ENCODE measurements at regions of chr7 and their contacts with region 1.

Region 1: DNA sequence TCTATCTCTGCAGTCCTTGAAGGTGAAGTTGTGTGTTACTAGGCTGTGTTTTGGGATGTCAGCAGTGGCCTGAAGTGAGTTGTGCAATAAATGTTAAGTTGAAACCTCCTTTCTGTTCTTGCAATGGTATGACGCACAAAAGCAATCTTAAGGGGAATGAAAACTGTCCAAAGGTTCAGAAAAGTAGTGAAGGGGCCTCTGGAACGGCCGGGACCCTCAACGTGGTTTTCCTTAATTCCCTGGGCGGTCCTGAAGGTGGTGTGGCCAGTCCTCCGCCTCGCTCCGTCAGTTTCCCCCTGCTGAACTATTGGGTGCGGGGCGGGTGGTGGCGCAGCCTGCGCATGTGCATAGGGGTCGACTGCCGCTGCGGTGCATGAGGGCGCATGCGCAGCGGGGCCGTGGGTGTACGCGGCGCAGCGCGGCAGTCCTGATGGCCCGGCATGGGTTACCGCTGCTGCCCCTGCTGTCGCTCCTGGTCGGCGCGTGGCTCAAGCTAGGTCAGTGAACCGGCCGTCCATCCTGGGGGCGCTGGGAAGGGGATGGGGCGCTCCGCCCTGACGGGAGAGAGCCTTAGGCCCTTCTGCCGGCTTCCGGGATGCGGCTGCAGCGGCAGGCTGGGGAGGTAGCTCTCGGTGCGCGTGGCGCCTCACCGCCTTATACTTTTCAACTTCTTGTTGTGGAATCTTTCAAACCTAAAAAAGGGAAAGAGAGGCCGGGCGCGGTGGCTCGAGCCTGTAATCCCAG is at the start of gene SUMF2:
- DNase-seq: peak; percentile 85
- ATAC-seq: peak; percentile 84
- H3K4me3 ChIP-seq: peak within 1 kb of the TSS; percentile 94
- H3K27ac ChIP-seq: peak within 1 kb of the TSS; percentile 60
- H3K4me1 ChIP-seq: peaks cover 44% of the 10 kb centered on the region
- H3K27me3 ChIP-seq: no peaks in the 10 kb centered on the region
- CTCF ChIP-seq: no peak
- total RNA-seq, gene SUMF2: 57.4 and 65.6 TPM in 2 replicates

Region 2: DNA sequence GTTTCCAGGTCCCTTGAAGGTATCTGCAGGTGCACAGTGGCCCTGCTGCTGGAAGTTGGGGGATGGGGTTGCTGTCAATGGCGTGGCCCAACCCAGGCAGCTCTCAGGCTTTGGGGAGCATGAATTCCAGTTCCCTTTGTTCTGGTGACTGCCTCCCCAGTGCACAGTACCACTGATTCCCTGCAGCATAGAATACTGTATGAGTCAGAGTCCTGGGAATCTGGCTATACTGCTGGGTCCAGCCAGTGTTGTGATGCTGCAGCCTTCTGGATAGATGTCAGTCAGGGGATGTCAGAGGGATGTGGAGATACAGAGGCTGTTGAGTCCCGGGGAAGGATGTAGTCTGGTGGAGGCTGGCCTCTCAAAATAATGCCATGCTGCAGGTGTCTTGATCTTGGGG is 599.6 kb before region 1 on chr7:
- CTCF ChIA-PET with region 1: no interaction called
- POLR2A ChIA-PET with region 1: no interaction called
- intact Hi-C with region 1: no loop called
- DNase-seq: no peak
- ATAC-seq: peak; percentile 59
- H3K4me3 ChIP-seq: no peak overlapping the region
- H3K27ac ChIP-seq: no peak overlapping the region
- H3K4me1 ChIP-seq: no peaks in the 10 kb centered on the region
- H3K27me3 ChIP-seq: no peaks in the 10 kb centered on the region
- CTCF ChIP-seq: no peak

Region 3: DNA sequence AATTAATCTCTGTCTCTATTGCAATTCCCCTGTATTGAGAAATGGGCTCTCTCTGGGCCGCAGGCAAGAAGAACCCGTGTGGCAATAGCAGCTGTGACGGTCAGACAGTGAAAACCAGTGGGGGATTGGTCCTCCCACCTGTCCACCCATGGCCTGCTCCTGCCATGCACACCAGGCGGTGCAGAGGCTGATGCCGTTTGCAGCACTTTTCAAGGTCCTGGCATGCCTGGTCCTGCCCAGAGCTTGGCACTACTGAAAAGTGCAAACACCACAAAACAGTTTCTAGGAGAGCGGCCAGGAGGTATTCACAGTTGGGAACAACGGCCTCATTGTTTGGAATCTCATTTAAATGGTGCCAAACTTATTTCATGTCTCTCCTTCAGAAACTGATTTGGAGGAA is 54.4 kb before region 1 on chr7:
- CTCF ChIA-PET with region 1: interaction called, 12 read pairs
- POLR2A ChIA-PET with region 1: no interaction called
- intact Hi-C with region 1: no loop called
- DNase-seq: no peak
- ATAC-seq: peak; percentile 71
- H3K4me3 ChIP-seq: no peak overlapping the region
- H3K27ac ChIP-seq: no peak overlapping the region
- H3K4me1 ChIP-seq: no peaks in the 10 kb centered on the region
- H3K27me3 ChIP-seq: no peaks in the 10 kb centered on the region
- CTCF ChIP-seq: no peak

Region 4: GRCh38 chr7:56033671-56034432 is 30.2 kb before region 1 on chr7:
- CTCF ChIA-PET with region 1: no interaction called
- POLR2A ChIA-PET with region 1: interaction called, 23 read pairs
- intact Hi-C with region 1: no loop called
- DNase-seq: peak; percentile 70
- ATAC-seq: peak; percentile 90
- H3K4me3 ChIP-seq: peak overlapping the region; percentile 69
- H3K27ac ChIP-seq: peak overlapping the region; percentile 35
- H3K4me1 ChIP-seq: no peaks in the 10 kb centered on the region
- H3K27me3 ChIP-seq: no peaks in the 10 kb centered on the region
- CTCF ChIP-seq: no peak